ENCODE measurements at regions of chr12 and their contacts with region 1.

Region 1: DNA sequence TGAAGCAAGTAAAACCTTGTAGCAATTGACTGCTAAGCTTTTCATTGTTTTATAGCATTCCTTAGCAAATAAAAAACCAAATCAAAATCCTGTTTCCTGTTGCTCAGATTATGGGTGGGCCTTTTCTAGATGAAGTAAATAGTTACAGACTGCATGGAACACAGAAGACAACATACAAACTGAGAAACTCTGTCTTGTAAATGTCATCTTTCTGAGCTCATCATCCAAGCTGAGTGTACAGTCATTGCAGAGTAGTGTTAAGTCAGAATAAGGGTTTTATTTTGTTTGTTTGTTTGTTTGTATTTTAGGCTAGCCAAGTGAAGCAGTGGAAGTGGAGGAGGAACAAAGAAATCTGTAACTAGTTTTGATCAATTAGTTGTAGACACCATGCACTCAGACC is 24.4 kb upstream of the BTG1 start:
- DNase-seq: no peak
- ATAC-seq: no peak
- H3K4me3 Mint-ChIP-seq: peak overlapping the region; percentile 6
- H3K27ac Mint-ChIP-seq: peak overlapping the region; percentile 74
- H3K4me1 Mint-ChIP-seq: peaks cover 72% of the 10 kb centered on the region
- H3K27me3 Mint-ChIP-seq: no peaks in the 10 kb centered on the region
- CTCF ChIP-seq: no peak

Region 2: GRCh38 chr12:92158796-92159439 is 11.1 kb before region 1 on chr12:
- CTCF ChIA-PET with region 1: no interaction called
- POLR2A ChIA-PET with region 1: interaction called, 165 read pairs
- intact Hi-C with region 1: loop called (anchors 1 kb)
- DNase-seq: no peak
- ATAC-seq: peak; percentile 65
- H3K4me3 Mint-ChIP-seq: peak overlapping the region; percentile 76
- H3K27ac Mint-ChIP-seq: peak overlapping the region; percentile 96
- H3K4me1 Mint-ChIP-seq: peaks cover 93% of the 10 kb centered on the region
- H3K27me3 Mint-ChIP-seq: no peaks in the 10 kb centered on the region
- CTCF ChIP-seq: no peak

Region 3: GRCh38 chr12:92199819-92200576 is 29.9 kb after region 1 on chr12:
- CTCF ChIA-PET with region 1: no interaction called
- POLR2A ChIA-PET with region 1: interaction called, 10 read pairs
- intact Hi-C with region 1: no loop called
- DNase-seq: no peak
- ATAC-seq: no peak
- H3K4me3 Mint-ChIP-seq: no peak overlapping the region
- H3K27ac Mint-ChIP-seq: no peak overlapping the region
- H3K4me1 Mint-ChIP-seq: no peaks in the 10 kb centered on the region
- H3K27me3 Mint-ChIP-seq: no peaks in the 10 kb centered on the region
- CTCF ChIP-seq: no peak

Region 4: DNA sequence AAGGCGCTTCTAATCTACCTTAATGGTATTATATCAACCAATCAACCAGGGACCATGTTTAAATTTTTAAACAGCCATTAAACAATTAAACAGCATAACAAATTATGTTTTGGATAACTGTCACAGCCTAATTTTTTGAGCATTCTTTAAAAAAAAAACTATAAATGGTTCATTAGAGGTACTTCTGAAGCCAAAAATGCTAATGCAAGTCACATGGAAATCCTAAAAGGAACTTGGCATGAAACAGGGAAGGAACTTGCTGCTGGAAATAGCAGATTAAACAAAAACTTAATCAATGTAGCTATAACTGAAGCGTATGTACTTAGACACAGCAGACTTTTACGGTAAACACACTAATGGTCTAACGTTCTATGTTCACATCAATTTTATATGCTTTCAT is 165.8 kb after region 1 on chr12:
- CTCF ChIA-PET with region 1: no interaction called
- POLR2A ChIA-PET with region 1: interaction called, 10 read pairs
- intact Hi-C with region 1: no loop called
- DNase-seq: no peak
- ATAC-seq: no peak
- H3K4me3 Mint-ChIP-seq: no peak overlapping the region
- H3K27ac Mint-ChIP-seq: no peak overlapping the region
- H3K4me1 Mint-ChIP-seq: peaks cover 45% of the 10 kb centered on the region
- H3K27me3 Mint-ChIP-seq: no peaks in the 10 kb centered on the region
- CTCF ChIP-seq: no peak

Region 5: DNA sequence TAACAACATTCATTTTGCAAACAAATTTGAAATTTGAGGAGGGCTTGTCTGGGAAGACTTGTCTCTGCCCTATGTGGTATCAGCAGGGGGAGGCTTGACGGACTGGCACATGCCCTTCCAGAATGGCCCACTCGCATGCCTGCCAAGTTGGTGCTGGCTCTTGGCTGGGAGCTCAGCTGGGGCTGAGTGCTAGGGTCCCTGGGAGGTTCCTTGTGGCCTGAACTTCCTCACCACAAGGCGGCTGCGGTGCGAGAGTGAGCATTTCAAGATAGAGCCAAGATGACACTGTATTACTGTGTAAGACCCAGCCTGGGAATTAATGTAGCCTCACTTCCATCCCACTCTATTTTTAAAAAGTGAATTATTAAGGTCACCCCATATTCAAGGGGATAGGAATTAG is 261.1 kb after region 1 on chr12:
- CTCF ChIA-PET with region 1: no interaction called
- POLR2A ChIA-PET with region 1: interaction called, 12 read pairs
- intact Hi-C with region 1: no loop called
- DNase-seq: peak; percentile 27
- ATAC-seq: peak; percentile 60
- H3K4me3 Mint-ChIP-seq: no peak overlapping the region
- H3K27ac Mint-ChIP-seq: peak overlapping the region; percentile 94
- H3K4me1 Mint-ChIP-seq: peaks cover 80% of the 10 kb centered on the region
- H3K27me3 Mint-ChIP-seq: no peaks in the 10 kb centered on the region
- CTCF ChIP-seq: no peak

Region 6: GRCh38 chr12:92505254-92506231 is 335.5 kb after region 1 on chr12:
- CTCF ChIA-PET with region 1: no interaction called
- POLR2A ChIA-PET with region 1: interaction called, 29 read pairs
- intact Hi-C with region 1: loop called (anchors 1 kb)
- DNase-seq: peak; percentile 20
- ATAC-seq: peak; percentile 47
- H3K4me3 Mint-ChIP-seq: peak overlapping the region; percentile 77
- H3K27ac Mint-ChIP-seq: peak overlapping the region; percentile 94
- H3K4me1 Mint-ChIP-seq: peaks cover 64% of the 10 kb centered on the region
- H3K27me3 Mint-ChIP-seq: no peaks in the 10 kb centered on the region
- CTCF ChIP-seq: no peak

Region 7: GRCh38 chr12:92593734-92594402 is 423.8 kb after region 1 on chr12:
- CTCF ChIA-PET with region 1: no interaction called
- POLR2A ChIA-PET with region 1: interaction called, 11 read pairs
- intact Hi-C with region 1: loop called (anchors 1 kb)
- DNase-seq: peak; percentile 49
- ATAC-seq: peak; percentile 92
- H3K4me3 Mint-ChIP-seq: peak overlapping the region; percentile 75
- H3K27ac Mint-ChIP-seq: peak overlapping the region; percentile 96
- H3K4me1 Mint-ChIP-seq: peaks cover 46% of the 10 kb centered on the region
- H3K27me3 Mint-ChIP-seq: no peaks in the 10 kb centered on the region
- CTCF ChIP-seq: no peak

Measured in activated B cell treated with CpG ODN at 0.5 μM for 24 hours (primary cell).